A549 (cell line): ENCODE measurements at regions of chr15 and their contacts with region 1.

Region 1: GRCh38 chr15:62624547-62625378 is 417.8 kb upstream of the TPM1 start:
- DNase-seq: no peak
- ATAC-seq: no peak; a peak in 1 of 6 replicates
- H3K4me3 ChIP-seq: no peak overlapping the region
- H3K27ac ChIP-seq: no peak overlapping the region
- H3K4me1 ChIP-seq: peaks cover 9% of the 10 kb centered on the region; the same call in 2 of the 3 replicates
- CTCF ChIP-seq: no peak
- EP300 ChIP-seq: no peak
- POLR2A ChIP-seq: no peak
- RAD21 ChIP-seq: no peak

Region 2: DNA sequence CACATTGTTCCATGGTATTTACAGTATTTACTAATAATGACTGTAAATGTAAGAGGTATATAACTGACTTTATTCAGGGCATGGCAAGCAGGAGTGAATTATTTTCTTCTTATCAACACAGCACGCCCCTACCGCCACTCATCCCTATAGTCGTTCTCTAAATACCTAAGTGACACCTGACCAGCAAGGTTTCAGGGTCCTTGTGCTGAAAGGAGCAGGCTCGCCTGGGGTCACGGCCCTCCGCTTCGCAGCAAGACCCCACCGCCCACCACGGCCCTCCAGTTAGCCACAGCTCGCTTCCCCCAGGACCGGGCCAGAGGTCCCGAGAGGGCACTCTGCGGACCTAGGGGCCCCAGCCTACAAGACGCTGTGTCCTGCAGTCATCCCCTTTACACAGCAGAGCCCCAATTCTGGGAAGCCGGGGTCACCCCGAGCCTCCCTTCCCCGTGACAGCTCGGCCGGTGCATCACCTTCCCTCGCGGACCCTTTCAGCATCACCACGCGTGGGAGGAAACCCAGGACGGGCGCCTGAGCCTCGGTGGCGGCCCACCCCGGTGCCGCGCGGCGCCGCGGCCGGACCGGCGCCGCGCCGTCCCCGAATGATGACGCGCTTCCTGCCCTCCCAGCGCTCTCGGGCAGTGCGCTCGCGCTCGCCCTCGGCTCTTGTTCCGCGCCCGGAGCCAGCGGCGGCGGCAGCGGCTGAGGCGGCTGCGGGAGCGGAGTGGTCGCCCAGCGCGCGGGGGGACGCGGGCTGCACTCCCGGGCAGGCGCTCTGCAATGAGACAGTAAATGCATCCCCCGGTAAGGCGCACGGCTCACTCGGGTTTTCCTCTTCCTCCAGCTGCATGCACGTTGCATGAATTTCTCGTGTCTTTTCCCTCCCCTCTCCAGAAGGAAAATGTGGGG is 234.6 kb before region 1 on chr15:
- CTCF ChIA-PET with region 1: no interaction called
- POLR2A ChIA-PET with region 1: no interaction called
- DNase-seq: peak; percentile 79 to 82
- ATAC-seq: peak; percentile 79 to 83
- H3K4me3 ChIP-seq: peak within 1 kb of the TSS; percentile 88
- H3K27ac ChIP-seq: peak within 1 kb of the TSS; percentile 92 to 95
- H3K4me1 ChIP-seq: peaks cover 14% of the 10 kb centered on the region
- CTCF ChIP-seq: no peak
- EP300 ChIP-seq: no peak
- POLR2A ChIP-seq: peak; percentile 97
- RAD21 ChIP-seq: peak in 1 of 2 experiments; percentile 11; a peak in 3 of 5 replicates

Region 3: GRCh38 chr15:62647202-62647865 is 22.6 kb after region 1 on chr15:
- CTCF ChIA-PET with region 1: interaction called, 10 read pairs
- POLR2A ChIA-PET with region 1: no interaction called
- DNase-seq: peak; percentile 90 to 93
- ATAC-seq: peak; percentile 87 to 89
- H3K4me3 ChIP-seq: no peak overlapping the region
- H3K27ac ChIP-seq: peak overlapping the region; percentile 50 to 59
- H3K4me1 ChIP-seq: peaks cover 13% of the 10 kb centered on the region
- CTCF ChIP-seq: no peak
- EP300 ChIP-seq: no peak
- POLR2A ChIP-seq: no peak
- RAD21 ChIP-seq: no peak

Region 4: GRCh38 chr15:62732078-62732477 is 107.3 kb after region 1 on chr15:
- CTCF ChIA-PET with region 1: no interaction called
- POLR2A ChIA-PET with region 1: no interaction called
- DNase-seq: no peak
- ATAC-seq: no peak
- H3K4me3 ChIP-seq: no peak overlapping the region
- H3K27ac ChIP-seq: no peak overlapping the region
- H3K4me1 ChIP-seq: no peaks in the 10 kb centered on the region
- CTCF ChIP-seq: no peak
- EP300 ChIP-seq: no peak
- POLR2A ChIP-seq: no peak
- RAD21 ChIP-seq: no peak